Gastrocnemius medialis (tissue), 4 donors: ENCODE measurements at regions of chr5 and their contacts with region 1.

Region 1: GRCh38 chr5:58207076-58207475 is 252.8 kb downstream of the PLK2 start:
- DNase-seq: no peak
- ATAC-seq: no peak
- H3K4me3 ChIP-seq: no peak overlapping the region
- H3K27ac ChIP-seq: no peak overlapping the region
- H3K4me1 ChIP-seq: no peaks in the 10 kb centered on the region
- H3K27me3 ChIP-seq: no peaks in the 10 kb centered on the region
- CTCF ChIP-seq: no peak
- POLR2A ChIP-seq: no peak

Region 2: GRCh38 chr5:58099257-58099656 is 107.8 kb before region 1 on chr5:
- in situ Hi-C with region 1: no loop called
- intact Hi-C with region 1: no loop called
- DNase-seq: no peak
- ATAC-seq: no peak
- H3K4me3 ChIP-seq: no peak overlapping the region
- H3K27ac ChIP-seq: no peak overlapping the region
- H3K4me1 ChIP-seq: no peaks in the 10 kb centered on the region
- H3K27me3 ChIP-seq: no peaks in the 10 kb centered on the region
- CTCF ChIP-seq: no peak
- POLR2A ChIP-seq: no peak

Region 3: GRCh38 chr5:58156986-58157701 is 49.9 kb before region 1 on chr5:
- in situ Hi-C with region 1: loop called in 1 of 4 experiments (anchors 5 kb)
- intact Hi-C with region 1: no loop called
- DNase-seq: no peak
- ATAC-seq: no peak
- H3K4me3 ChIP-seq: no peak overlapping the region
- H3K27ac ChIP-seq: no peak overlapping the region
- H3K4me1 ChIP-seq: peaks cover 8 to 11% of the 10 kb centered on the region in 2 donors
- H3K27me3 ChIP-seq: no peaks in the 10 kb centered on the region
- CTCF ChIP-seq: no peak
- POLR2A ChIP-seq: no peak